IMR-90 (cell line): ENCODE measurements at regions of chr2 and their contacts with region 1.

Region 1: GRCh38 chr2:218322895-218323808 is 30.8 kb upstream of the TMBIM1 start:
- DNase-seq: peak; percentile 54
- ATAC-seq: peak; percentile 87
- H3K4me3 ChIP-seq: peak overlapping the region; percentile 77
- H3K27ac ChIP-seq: peak overlapping the region; percentile 59
- H3K4me1 ChIP-seq: peaks cover 10% of the 10 kb centered on the region
- H3K27me3 ChIP-seq: no peaks in the 10 kb centered on the region
- CTCF ChIP-seq: no peak
- POLR2A ChIP-seq: no peak
- RAD21 ChIP-seq: no peak

Region 2: GRCh38 chr2:217846321-217846743 is 476.8 kb before region 1 on chr2:
- CTCF ChIA-PET with region 1: no interaction called
- POLR2A ChIA-PET with region 1: no interaction called
- dilution Hi-C with region 1: no loop called
- in situ Hi-C with region 1: no loop called
- intact Hi-C with region 1: no loop called
- DNase-seq: no peak
- ATAC-seq: no peak
- H3K4me3 ChIP-seq: no peak overlapping the region
- H3K27ac ChIP-seq: no peak overlapping the region
- H3K4me1 ChIP-seq: peaks cover 16% of the 10 kb centered on the region
- H3K27me3 ChIP-seq: no peaks in the 10 kb centered on the region
- CTCF ChIP-seq: no peak
- POLR2A ChIP-seq: no peak
- RAD21 ChIP-seq: no peak

Region 3: GRCh38 chr2:218257390-218257981 is 65.7 kb before region 1 on chr2:
- CTCF ChIA-PET with region 1: no interaction called
- POLR2A ChIA-PET with region 1: no interaction called
- dilution Hi-C with region 1: no loop called
- in situ Hi-C with region 1: no loop called
- intact Hi-C with region 1: no loop called
- DNase-seq: no peak
- ATAC-seq: no peak
- H3K4me3 ChIP-seq: no peak overlapping the region
- H3K27ac ChIP-seq: no peak overlapping the region
- H3K4me1 ChIP-seq: peaks cover 14% of the 10 kb centered on the region
- H3K27me3 ChIP-seq: no peaks in the 10 kb centered on the region
- CTCF ChIP-seq: peak; percentile 51
- POLR2A ChIP-seq: no peak
- RAD21 ChIP-seq: no peak

Region 4: DNA sequence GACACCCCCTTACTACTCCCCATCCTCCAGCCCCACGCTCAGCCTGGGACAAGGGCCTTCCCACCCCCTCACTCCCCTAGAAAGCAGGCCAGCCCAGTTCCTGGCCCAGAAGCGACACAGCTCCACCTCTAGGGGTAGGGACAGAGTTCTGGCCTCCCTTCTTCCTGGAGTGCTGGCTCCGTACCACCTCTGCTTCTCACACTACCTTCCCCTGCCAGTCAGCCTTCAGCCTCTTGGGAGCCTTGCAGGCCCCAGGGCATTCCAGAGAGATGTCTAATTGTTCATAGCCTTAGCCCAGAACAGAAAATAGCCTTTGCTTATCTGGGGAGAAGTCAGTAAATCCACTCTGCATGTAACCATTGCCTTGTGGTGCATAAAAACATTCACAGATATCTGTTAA is 20.4 kb after region 1 on chr2:
- CTCF ChIA-PET with region 1: no interaction called
- POLR2A ChIA-PET with region 1: no interaction called
- dilution Hi-C with region 1: no loop called
- in situ Hi-C with region 1: no loop called
- intact Hi-C with region 1: loop called (anchors 2 kb)
- DNase-seq: peak; percentile 67
- ATAC-seq: peak; percentile 94
- H3K4me3 ChIP-seq: no peak overlapping the region
- H3K27ac ChIP-seq: no peak overlapping the region
- H3K4me1 ChIP-seq: peaks cover 8% of the 10 kb centered on the region; the same call in 1 of the 2 replicates
- H3K27me3 ChIP-seq: no peaks in the 10 kb centered on the region; the same call in 1 of the 2 replicates
- CTCF ChIP-seq: no peak
- POLR2A ChIP-seq: no peak
- RAD21 ChIP-seq: no peak